ENCODE measurements at regions of chr5 and their contacts with region 1.

Region 1: GRCh38 chr5:173764321-173765029 is 123.7 kb upstream of the CPEB4 start:
- DNase-seq: peak; percentile 92
- H3K4me3 ChIP-seq: no peak overlapping the region
- H3K27ac ChIP-seq: peak overlapping the region; percentile 17
- H3K4me1 ChIP-seq: peaks cover 19% of the 10 kb centered on the region
- H3K27me3 ChIP-seq: no peaks in the 10 kb centered on the region
- CTCF ChIP-seq: no peak

Region 2: DNA sequence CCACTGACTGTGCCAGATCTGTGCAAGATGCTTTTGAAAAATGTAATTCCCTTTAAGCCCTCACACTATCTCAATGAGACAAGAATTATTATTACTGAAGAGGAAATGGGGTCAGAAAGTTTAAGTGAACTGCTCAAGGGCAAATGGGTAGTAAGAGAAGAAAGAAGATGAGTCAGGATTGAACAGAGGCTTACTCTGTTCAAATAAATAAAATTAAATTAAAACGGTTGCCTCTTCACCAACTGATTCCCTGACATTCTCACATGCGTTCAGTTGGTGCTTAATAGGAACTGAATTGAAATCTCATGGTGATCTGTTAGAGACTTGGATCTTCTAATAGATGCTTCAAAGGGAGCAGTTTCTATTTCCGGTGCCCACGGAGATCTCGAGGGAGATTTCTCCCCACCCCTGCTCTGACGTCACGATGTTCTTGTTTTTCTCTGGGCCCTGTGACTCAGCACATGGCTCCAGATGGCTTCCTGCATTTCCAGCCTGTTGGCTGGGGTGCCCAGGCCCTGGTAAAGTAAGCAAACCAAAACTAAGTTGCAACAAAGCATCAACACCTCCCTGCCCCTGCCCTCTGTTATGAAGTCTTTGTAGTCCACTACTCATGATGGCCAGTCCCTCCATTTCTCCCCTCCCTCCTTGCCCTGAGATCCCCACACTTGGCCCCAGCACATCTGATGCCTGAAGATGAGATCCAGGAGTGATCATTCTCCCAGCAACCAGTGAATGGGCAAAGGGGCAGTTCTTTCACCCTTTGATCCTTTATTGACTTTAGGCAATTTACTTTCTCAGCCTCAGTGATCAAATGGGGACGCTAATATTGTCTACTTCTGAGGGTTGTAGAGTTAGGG is 17.6 kb after region 1 on chr5:
- CTCF ChIA-PET with region 1: no interaction called
- dilution Hi-C with region 1: no loop called
- in situ Hi-C with region 1: no loop called
- intact Hi-C with region 1: loop called (anchors 1 kb)
- DNase-seq: peak; percentile 86
- H3K4me3 ChIP-seq: no peak overlapping the region
- H3K27ac ChIP-seq: peak overlapping the region; percentile 82
- H3K4me1 ChIP-seq: peaks cover 16% of the 10 kb centered on the region
- H3K27me3 ChIP-seq: no peaks in the 10 kb centered on the region
- CTCF ChIP-seq: no peak

Region 3: DNA sequence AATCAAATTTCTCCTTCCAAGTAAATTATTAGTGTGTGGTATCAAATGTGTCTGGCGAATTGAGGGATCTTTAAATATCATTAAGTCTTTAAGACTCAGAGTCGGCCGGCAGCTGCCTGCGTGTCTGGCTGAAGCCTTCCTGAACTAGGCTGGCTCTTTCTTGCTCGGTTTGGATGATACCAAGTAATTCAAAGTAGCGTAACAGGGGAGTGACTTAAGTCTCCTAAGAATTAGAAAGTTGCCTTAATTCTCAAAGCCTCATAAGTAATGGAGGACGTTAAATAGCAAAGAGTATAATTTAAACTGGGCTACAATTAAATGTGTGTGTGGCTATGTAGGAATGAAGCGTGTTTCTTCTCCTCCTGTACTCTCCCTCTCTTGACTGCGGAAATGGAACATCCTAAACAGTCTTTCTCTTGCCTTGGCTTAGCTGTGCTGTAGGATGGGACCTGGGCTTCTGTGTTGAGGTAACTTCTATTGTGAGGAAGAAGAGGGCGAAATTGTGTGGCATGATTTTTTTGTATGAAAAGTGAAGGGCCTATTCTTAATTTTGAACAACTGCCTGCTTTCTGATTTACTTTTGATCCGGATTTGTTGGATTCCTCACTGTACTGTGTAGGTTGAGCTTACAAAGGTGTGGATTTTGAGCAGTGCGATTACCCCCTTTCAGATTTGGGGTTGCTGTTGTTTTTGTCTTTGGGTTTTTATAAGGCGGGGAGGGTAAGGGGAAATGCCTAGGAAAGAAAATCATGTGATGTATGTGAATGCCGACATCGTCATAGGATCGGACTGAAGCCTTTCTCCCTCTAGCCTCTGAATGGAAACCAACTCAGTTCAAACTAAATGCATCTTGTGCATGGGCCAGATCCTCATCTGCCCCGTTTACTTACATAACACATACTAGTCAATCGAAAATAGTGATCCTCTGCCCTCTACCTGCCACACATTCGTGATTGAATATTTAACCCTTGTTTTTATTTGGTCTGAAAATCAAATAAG is 153.6 kb after region 1 on chr5:
- CTCF ChIA-PET with region 1: no interaction called
- dilution Hi-C with region 1: no loop called
- in situ Hi-C with region 1: no loop called
- intact Hi-C with region 1: loop called (anchors 2 kb)
- DNase-seq: peak; percentile 85
- H3K4me3 ChIP-seq: peak overlapping the region; percentile 45 to 75 (median 52)
- H3K27ac ChIP-seq: peak overlapping the region; percentile 97
- H3K4me1 ChIP-seq: peaks cover 16% of the 10 kb centered on the region
- H3K27me3 ChIP-seq: no peaks in the 10 kb centered on the region
- CTCF ChIP-seq: peak in 1 of 2 donors; percentile 37

Region 4: GRCh38 chr5:174159327-174160247 is 395.1 kb after region 1 on chr5:
- CTCF ChIA-PET with region 1: no interaction called
- dilution Hi-C with region 1: no loop called
- in situ Hi-C with region 1: no loop called
- intact Hi-C with region 1: no loop called
- DNase-seq: peak; percentile 51
- H3K4me3 ChIP-seq: no peak overlapping the region
- H3K27ac ChIP-seq: no peak overlapping the region
- H3K4me1 ChIP-seq: peaks cover 6% of the 10 kb centered on the region
- H3K27me3 ChIP-seq: no peaks in the 10 kb centered on the region
- CTCF ChIP-seq: no peak

Measured in mammary epithelial cell (primary cell).